T-cell (primary cell): ENCODE measurements at regions of chr4 and their contacts with region 1.

Region 1: DNA sequence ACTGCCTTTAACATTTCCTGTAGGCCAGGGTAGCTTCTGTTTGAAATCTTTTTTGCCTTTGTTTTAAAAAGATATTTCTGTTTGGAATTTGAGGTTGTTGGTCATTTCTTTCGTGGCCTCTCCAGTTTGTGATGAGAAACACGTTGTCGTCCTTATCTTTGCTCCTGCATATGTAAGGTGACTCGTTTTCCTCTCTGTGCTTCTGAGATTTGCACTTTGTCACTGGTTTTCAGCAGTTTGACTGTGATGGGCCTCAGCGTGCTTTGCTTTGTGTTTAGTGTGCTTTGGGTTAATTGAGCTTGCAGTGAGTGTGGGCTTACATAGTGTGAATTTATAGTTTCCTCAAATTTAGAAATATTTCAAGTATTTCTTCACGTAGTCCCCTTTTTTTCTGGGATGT is 81.5 kb downstream of the FAM193A start:
- DNase-seq: no peak
- ATAC-seq: no peak
- H3K4me3 ChIP-seq: no peak overlapping the region
- H3K4me3 Mint-ChIP-seq: no peak overlapping the region
- H3K27ac ChIP-seq: no peak overlapping the region
- H3K27ac Mint-ChIP-seq: no peak overlapping the region
- H3K4me1 ChIP-seq: peaks cover 0 to 6% of the 10 kb centered on the region in 2 experiments
- H3K4me1 Mint-ChIP-seq: peaks cover 51 to 60% (median 59%) of the 10 kb centered on the region in 3 donors
- H3K27me3 ChIP-seq: no peaks in the 10 kb centered on the region
- H3K27me3 Mint-ChIP-seq: no peaks in the 10 kb centered on the region

Region 2: DNA sequence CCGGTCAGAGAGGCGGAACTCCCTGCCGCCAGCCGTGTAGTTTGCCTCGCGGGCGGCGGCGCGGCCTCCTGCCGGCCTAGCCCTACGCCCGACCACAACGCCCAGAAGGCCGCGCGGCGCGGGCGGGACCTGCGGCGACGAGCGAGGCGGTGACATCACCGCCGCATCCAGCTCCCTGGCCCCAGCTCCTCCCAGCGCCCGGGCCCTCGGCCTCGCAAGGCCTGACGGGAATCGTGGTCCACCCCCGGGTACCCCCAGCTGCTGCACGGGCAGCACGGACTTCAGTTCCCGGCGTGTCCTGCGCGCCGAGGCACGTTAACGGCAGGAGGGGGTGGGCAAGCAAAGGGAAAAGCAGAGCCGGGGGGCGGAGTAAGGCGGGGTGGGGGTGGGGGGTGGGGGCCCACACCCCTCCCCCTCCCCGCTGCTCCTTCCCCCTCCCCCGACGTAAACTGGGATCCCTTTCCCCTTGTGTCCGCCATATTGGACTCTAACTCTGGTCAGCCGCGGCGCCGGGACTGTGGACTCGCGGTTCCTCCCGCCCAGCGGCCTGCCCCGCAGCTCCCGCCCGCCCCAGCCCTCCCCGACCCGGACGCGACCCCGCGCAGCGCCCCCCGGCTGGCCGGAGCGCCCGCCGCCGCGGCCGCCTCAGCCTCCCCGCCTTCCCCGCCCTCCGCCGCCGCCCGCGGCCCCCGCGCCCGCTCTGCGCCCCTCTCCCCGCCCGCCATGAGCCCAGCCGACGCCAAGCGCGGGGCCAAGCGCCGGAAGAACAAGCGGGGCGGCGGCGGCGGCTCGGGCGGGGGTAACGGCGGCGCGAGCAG is 81.6 kb before region 1 on chr4 and contains the start of gene FAM193A:
- CTCF ChIA-PET with region 1: interaction called in 1 of 2 experiments, 7 read pairs
- POLR2A ChIA-PET with region 1: interaction called in 1 of 2 experiments, 25 read pairs
- DNase-seq: peak; percentile 94 to 100 (median 99)
- ATAC-seq: peak; percentile 92 to 95 (median 92)
- H3K4me3 ChIP-seq: peak within 1 kb of the TSS; percentile 61 to 80
- H3K4me3 Mint-ChIP-seq: peak within 1 kb of the TSS; percentile 85 to 93 (median 85)
- H3K27ac ChIP-seq: peak within 1 kb of the TSS; percentile 64
- H3K27ac Mint-ChIP-seq: peak within 1 kb of the TSS; percentile 87 to 90
- H3K4me1 ChIP-seq: peaks cover 3 to 31% of the 10 kb centered on the region in 2 experiments
- H3K4me1 Mint-ChIP-seq: peaks cover 23 to 31% (median 31%) of the 10 kb centered on the region in 3 donors
- H3K27me3 ChIP-seq: peaks cover 0 to 3% of the 10 kb centered on the region in 2 experiments
- H3K27me3 Mint-ChIP-seq: no peaks in the 10 kb centered on the region
- total RNA-seq, gene FAM193A: 41.6 to 46.8 (median 45.2) TPM

Region 3: DNA sequence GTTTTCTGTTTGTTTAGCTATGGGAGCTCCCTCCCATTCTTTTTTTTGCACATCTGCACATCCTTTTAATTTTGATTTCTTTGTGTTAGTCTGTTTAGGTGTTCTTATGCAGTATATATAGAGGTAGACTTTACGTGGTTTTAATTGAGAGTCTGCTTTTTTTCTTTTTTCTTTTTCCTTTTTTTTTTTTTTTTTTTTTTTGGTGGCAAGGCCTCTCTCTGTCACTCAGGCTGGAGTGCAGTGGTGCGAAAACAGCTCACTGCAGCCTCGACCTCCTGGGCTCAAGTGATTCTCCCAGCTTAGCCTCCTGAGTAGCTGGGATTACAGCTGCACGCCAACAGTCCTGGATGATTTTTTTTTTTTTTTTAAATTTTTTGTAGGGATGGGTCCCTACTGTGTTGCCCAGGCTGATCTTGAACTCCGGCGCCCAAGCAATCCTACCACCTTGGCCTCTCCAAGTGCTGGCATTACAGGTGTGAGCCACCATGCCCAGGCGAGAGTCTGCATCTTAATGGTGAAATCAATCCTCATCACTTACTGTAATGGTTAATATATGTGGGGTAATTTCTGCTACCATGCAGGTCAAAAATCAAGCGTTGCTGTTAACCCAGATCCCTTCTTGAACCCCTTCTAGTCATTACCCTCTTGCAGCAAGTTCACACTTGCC is 13.2 kb before region 1 on chr4:
- CTCF ChIA-PET with region 1: interaction called in 1 of 2 experiments, 20 read pairs
- POLR2A ChIA-PET with region 1: no interaction called
- DNase-seq: no peak
- ATAC-seq: no peak
- H3K4me3 ChIP-seq: no peak overlapping the region
- H3K4me3 Mint-ChIP-seq: no peak overlapping the region
- H3K27ac ChIP-seq: no peak overlapping the region
- H3K27ac Mint-ChIP-seq: no peak overlapping the region
- H3K4me1 ChIP-seq: peaks cover 0 to 2% of the 10 kb centered on the region in 2 experiments
- H3K4me1 Mint-ChIP-seq: peaks cover 42 to 50% (median 44%) of the 10 kb centered on the region in 3 donors
- H3K27me3 ChIP-seq: no peaks in the 10 kb centered on the region
- H3K27me3 Mint-ChIP-seq: no peaks in the 10 kb centered on the region